ENCODE measurements at regions of chr6 and their contacts with region 1.

Region 1: DNA sequence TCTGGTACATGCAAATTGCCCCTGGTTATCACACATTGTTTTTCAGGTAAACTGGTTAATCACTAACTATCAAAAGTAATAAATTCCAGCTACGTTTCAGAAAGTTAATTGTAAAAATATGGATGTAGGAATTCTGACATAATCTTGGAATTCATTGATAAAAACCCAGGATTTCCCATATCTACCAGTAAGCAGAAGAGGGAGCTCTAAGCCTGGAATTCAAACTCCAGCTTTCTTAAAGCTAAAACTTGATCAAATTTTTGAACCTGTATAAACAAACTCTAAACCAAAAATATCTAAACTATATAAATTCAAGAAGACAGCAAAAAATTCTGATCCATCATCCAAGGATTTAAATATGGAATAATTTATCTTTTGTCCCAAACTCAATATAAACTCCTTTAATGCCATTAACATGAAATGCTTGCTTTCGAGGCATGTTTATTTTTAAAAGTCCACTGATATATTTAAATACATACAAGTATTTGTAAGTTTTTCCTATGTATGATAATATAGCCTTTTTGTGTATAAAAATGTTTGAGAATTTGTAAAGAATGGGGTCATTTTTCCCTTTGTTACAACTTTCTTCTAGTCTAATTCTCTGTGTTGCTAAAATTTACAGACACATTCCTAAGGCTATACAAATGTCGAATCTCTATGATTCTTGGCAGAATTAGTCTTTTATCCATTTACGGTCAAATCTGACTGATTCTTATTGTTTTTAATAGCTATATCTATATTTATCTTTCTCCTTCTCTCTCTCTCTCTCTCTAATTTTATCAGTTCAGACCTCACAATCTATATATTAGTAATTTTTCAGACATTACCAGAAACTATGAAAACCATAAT is 91.4 kb upstream of the RNF217 start:
- DNase-seq: peak in 1 of 3 donors; percentile 8
- ATAC-seq: no peak
- H3K4me3 ChIP-seq: no peak overlapping the region
- H3K4me1 ChIP-seq: no peaks in the 10 kb centered on the region
- CTCF ChIP-seq: no peak

Region 2: DNA sequence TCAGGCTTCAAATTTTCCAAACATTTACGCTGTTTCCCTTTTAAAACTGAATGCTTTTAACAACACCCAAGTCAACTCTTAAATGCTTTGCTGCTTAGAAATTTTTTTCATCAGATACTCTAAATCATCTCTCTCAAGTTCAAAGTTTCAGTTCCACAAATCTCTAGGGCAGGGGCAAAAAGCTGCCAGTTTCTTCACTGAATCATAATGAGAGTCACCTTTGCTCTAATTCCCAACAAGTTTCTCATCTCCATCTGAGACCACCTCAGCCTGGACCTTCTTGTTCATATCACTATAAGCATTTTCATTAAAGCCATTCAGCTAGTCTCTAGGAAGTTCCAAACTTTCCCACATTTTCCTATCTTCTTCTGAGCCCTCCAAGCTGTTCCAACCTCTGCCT is 160.6 kb after region 1 on chr6:
- intact Hi-C with region 1: no loop called
- DNase-seq: no peak
- ATAC-seq: no peak
- H3K4me3 ChIP-seq: no peak overlapping the region
- H3K4me1 ChIP-seq: no peaks in the 10 kb centered on the region
- CTCF ChIP-seq: no peak

Region 3: GRCh38 chr6:125114248-125114858 is 243.5 kb after region 1 on chr6:
- intact Hi-C with region 1: loop called (anchors 1 to 5 kb)
- DNase-seq: peak in 1 of 3 donors; percentile 83
- ATAC-seq: no peak
- H3K4me3 ChIP-seq: no peak overlapping the region
- H3K4me1 ChIP-seq: no peaks in the 10 kb centered on the region
- CTCF ChIP-seq: peak; percentile 64